ENCODE measurements at regions of chr1 and their contacts with region 1.

Region 1: GRCh38 chr1:75724472-75725022 is at the start of gene ACADM:
- DNase-seq: peak; percentile 97
- H3K4me3 Mint-ChIP-seq: peak within 1 kb of the TSS; percentile 100
- H3K27ac Mint-ChIP-seq: peak within 1 kb of the TSS; percentile 99
- H3K4me1 Mint-ChIP-seq: peaks cover 32% of the 10 kb centered on the region
- H3K27me3 Mint-ChIP-seq: peaks cover 3% of the 10 kb centered on the region
- total RNA-seq, gene ACADM: 55.3 and 56.7 TPM in 2 replicates

Region 2: DNA sequence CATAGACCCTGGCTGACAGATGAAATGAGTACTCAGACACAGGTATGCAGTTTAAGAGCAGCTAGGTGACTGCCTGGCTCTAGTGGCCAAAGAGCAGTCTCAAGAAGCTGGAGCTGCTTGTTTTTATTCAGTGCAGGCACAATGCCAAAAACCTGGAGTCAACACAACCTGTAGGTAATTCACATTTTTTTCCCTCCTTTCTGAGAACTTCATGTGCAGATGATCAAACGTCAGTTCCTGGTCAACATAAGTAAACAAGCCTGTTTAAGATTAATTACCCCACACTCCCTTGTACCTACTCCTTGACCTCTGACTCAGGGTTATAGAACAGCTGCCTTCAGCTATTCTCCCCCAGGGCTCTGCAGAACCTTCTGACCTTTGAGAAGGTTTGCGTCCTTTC is 17.4 kb before region 1 on chr1:
- intact Hi-C with region 1: no loop called
- DNase-seq: no peak
- H3K4me3 Mint-ChIP-seq: no peak overlapping the region
- H3K27ac Mint-ChIP-seq: no peak overlapping the region
- H3K4me1 Mint-ChIP-seq: no peaks in the 10 kb centered on the region
- H3K27me3 Mint-ChIP-seq: peaks cover 23% of the 10 kb centered on the region

Region 3: GRCh38 chr1:75745276-75745675 is 20.7 kb after region 1 on chr1:
- intact Hi-C with region 1: loop called (anchors 2 kb)
- DNase-seq: no peak
- H3K4me3 Mint-ChIP-seq: no peak overlapping the region
- H3K27ac Mint-ChIP-seq: peak overlapping the region; percentile 62
- H3K4me1 Mint-ChIP-seq: peaks cover 2% of the 10 kb centered on the region
- H3K27me3 Mint-ChIP-seq: no peaks in the 10 kb centered on the region

Region 4: DNA sequence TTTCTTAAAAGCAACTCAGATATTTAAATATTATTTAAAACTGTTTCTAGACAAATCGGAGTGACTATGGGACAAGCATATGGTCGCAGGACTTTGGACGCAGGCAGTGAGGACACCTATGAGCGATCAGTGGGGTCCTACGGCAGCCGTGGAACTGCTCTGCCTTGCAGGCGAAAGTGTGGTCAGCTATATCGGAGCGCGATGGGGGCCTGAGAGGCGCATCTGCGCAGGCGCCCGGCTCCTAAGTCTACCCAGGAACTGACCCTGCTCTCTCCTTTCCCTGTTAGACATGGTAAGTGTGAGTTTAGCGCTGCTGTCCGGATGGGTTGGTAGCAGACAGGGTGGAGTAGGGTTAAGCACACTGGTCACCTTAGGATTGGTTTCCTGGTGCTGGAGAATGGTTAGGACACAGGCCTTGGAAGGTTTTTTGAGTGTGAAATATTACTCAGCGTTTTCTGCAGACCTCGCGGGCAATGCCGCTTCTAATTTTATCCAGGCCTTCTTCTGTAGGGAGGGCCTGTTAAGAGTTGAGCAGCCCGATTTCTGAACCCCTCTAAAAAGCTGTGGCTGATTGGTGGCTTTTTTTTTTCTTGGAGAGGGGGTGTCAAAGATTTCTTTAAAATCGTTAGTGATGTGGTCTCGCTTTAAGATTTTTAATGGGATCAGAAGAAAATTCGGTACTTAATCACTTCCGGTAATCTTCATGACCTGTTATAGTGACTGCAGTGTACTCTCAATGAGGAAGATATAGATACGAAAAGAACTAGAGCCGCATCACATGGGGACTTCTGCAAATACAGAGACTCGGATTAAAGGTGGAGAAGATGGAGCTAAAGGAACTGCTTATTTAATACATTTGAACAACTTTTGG is 61.7 kb after region 1 on chr1 and contains the start of gene RABGGTB:
- intact Hi-C with region 1: loop called (anchors 1 kb)
- DNase-seq: peak; percentile 98
- H3K4me3 Mint-ChIP-seq: peak within 1 kb of the TSS; percentile 89
- H3K27ac Mint-ChIP-seq: peak within 1 kb of the TSS; percentile 96
- H3K4me1 Mint-ChIP-seq: peaks cover 30% of the 10 kb centered on the region
- H3K27me3 Mint-ChIP-seq: peaks cover 6% of the 10 kb centered on the region
- total RNA-seq, gene RABGGTB: 235 and 237 TPM in 2 replicates

Region 5: GRCh38 chr1:76074321-76075187 is 350.0 kb after region 1 on chr1 and contains the start of gene ST6GALNAC3:
- intact Hi-C with region 1: loop called (anchors 5 kb)
- DNase-seq: peak; percentile 93
- H3K4me3 Mint-ChIP-seq: peak within 1 kb of the TSS; percentile 86
- H3K27ac Mint-ChIP-seq: peak within 1 kb of the TSS; percentile 47
- H3K4me1 Mint-ChIP-seq: peaks cover 13% of the 10 kb centered on the region
- H3K27me3 Mint-ChIP-seq: peaks cover 18% of the 10 kb centered on the region
- total RNA-seq, gene ST6GALNAC3: 0.28 TPM in 1 of 2 replicates, not detected in the other

Measured in activated CD4-positive, alpha-beta T cell treated with anti-CD3 and anti-CD28 coated beads, Interleukin-2, amount 10 ng/mL, durations not matched to agents 24 days and 14 days (primary cell).